ENCODE measurements at regions of chr17 and their contacts with region 1.

Region 1: GRCh38 chr17:48011405-48012150 is 26.0 kb downstream of the COPZ2 start:
- DNase-seq: peak; percentile 68
- H3K4me3 Mint-ChIP-seq: peak overlapping the region; percentile 73
- H3K27ac Mint-ChIP-seq: no peak overlapping the region
- H3K4me1 Mint-ChIP-seq: peaks cover 23% of the 10 kb centered on the region
- H3K27me3 Mint-ChIP-seq: peaks cover 49% of the 10 kb centered on the region

Region 2: DNA sequence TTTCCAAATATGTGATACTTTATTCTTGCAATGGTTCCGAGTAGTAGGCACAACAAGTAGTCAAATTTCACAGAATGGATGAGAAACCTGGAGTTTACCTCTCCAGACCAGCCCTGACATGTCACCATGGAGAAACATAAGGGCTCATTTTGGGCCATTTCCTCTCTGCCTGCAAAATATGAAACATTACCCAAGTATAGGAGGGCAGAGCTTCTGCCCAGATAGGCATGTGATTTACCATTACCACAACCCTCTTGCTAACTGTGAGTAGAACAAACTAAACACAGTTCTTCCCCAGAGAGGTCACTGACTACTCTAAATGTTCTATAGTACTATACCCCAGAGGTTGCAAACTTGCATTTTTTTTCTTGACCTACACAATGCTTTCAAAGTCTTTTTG is 377.6 kb before region 1 on chr17:
- CTCF ChIA-PET with region 1: no interaction called
- POLR2A ChIA-PET with region 1: no interaction called
- DNase-seq: no peak
- H3K4me3 Mint-ChIP-seq: no peak overlapping the region
- H3K27ac Mint-ChIP-seq: no peak overlapping the region
- H3K4me1 Mint-ChIP-seq: peaks cover 21% of the 10 kb centered on the region
- H3K27me3 Mint-ChIP-seq: no peaks in the 10 kb centered on the region

Region 3: DNA sequence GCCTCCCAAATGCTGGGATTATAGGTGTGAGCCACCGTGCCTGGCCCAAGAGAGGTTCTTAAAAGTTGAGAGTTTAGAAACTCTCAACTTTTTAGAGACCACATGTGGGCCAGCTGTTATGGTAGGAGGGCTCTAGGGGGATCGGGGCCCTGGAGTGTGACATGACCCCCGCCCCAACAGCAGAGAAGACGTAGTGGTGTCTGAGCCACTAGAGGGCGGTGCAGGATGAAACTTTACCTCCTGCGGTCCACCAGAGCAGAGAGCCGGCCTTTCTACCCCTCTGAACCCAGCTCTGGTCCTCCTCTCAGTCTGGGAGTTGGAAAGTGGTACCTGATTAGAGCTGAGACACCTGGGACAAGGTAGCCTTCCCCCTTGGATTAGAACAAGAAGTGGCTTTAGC is 33.3 kb before region 1 on chr17:
- CTCF ChIA-PET with region 1: interaction called, 185 read pairs
- POLR2A ChIA-PET with region 1: interaction called, 22 read pairs
- DNase-seq: peak; percentile 61
- H3K4me3 Mint-ChIP-seq: no peak overlapping the region
- H3K27ac Mint-ChIP-seq: no peak overlapping the region
- H3K4me1 Mint-ChIP-seq: peaks cover 18% of the 10 kb centered on the region
- H3K27me3 Mint-ChIP-seq: no peaks in the 10 kb centered on the region

Region 4: DNA sequence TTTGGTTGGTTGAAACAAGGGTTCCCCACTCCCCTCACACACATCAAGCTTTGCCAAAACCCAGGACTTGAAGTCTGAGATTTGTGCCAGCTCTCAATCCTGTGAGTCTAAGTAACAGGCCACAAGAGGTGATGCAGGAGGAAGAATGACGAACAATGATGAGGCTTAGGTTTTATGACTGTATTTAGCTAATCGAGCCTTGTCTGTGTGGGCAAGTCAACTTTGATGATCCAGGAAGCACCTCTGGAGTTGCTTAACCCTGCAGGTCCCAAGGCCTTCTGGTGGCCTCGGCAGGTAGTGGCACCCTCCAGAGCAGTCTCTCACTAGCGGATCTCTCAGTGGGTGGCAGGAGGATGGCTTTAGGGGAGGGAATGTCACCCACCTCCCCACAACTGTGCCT is 12.0 kb before region 1 on chr17:
- CTCF ChIA-PET with region 1: interaction called, 12 read pairs
- POLR2A ChIA-PET with region 1: no interaction called
- DNase-seq: no peak
- H3K4me3 Mint-ChIP-seq: no peak overlapping the region
- H3K27ac Mint-ChIP-seq: no peak overlapping the region
- H3K4me1 Mint-ChIP-seq: peaks cover 18% of the 10 kb centered on the region
- H3K27me3 Mint-ChIP-seq: peaks cover 24% of the 10 kb centered on the region

Measured in activated CD4-positive, alpha-beta memory T cell treated with anti-CD3 and anti-CD28 coated beads, Interleukin-2, amount 10 ng/mL, durations not matched to agents 7 days and 5 days (primary cell).